ENCODE measurements at regions of chr20 and their contacts with region 1.

Region 1: DNA sequence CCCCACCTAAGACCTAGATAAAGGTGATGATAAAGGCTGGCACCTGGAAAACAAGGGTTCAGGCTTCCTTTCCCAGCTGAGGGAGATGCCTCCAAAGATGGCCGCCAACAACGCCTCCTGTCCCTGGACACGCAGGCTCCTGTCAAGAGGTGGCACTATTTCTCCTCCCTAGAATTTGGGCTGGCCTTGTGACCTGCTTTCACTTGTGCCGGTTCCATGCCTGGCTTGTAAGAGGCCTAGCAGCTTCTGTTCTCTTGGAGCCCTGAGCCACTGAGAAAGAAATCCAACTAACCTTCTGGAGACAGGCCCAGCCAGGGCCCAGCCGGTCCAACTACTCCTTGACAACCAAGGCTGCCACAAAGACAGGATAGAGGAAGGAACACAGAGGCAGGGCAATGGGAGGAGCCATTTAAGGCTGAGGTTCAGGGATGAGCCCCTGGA is 60.2 kb upstream of the RALY start:
- DNase-seq: peak; percentile 13
- ATAC-seq: peak; percentile 89
- H3K4me3 ChIP-seq: no peak overlapping the region
- H3K27ac ChIP-seq: no peak overlapping the region
- H3K4me1 ChIP-seq: no peaks in the 10 kb centered on the region
- H3K27me3 ChIP-seq: no peaks in the 10 kb centered on the region; the same call in 1 of the 2 replicates
- CTCF ChIP-seq: no peak; the same call in 1 of the 2 replicates

Region 2: DNA sequence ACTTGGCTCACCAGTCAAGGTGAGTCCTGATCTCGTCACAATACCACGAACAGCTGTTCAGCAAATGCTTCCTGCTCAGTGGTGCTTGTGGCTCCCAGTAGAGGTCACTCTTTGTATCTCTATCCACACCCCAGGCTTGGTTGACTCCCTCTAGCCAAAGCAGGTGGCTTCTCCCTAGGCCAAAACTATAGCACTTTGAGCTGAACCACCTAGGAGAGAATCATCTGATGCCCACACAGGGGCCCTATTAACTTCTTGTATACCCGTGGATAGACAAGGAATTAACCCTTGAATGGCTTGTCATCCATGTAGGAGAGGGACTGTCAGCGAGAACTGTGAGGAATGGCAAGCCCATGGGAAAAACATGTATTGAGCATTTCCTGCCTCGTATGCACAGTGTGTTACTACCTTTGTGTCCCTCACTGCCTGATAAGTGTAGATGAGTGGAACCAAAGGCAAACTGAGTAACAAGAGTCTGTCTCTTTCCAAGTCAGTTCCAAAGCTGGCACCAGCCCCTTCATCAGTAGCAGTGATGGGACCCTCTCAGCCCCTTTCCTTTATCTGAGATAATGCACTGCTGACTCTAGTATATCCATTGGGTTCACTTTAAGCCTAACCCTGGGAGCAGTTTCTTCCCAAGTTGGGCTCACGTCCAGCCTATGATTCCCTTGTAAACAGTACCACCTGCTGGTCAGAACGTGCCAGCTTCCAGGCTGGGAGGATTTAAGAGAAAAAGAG is 136.0 kb after region 1 on chr20:
- CTCF ChIA-PET with region 1: no interaction called
- POLR2A ChIA-PET with region 1: no interaction called
- in situ Hi-C with region 1: no loop called
- intact Hi-C with region 1: loop called (anchors 10 kb)
- DNase-seq: peak; percentile 73
- ATAC-seq: peak; percentile 93
- H3K4me3 ChIP-seq: no peak overlapping the region
- H3K27ac ChIP-seq: no peak overlapping the region
- H3K4me1 ChIP-seq: peaks cover 10% of the 10 kb centered on the region
- H3K27me3 ChIP-seq: no peaks in the 10 kb centered on the region
- CTCF ChIP-seq: peak; percentile 81